Activated CD4-positive, alpha-beta memory T cell treated with anti-CD3 and anti-CD28 coated beads for 36 hours (primary cell): ENCODE measurements at regions of chr9 and their contacts with region 1.

Region 1: GRCh38 chr9:104991144-104991953 is 63.4 kb upstream of the ABCA1 start:
- DNase-seq: peak; percentile 93
- H3K4me3 Mint-ChIP-seq: peak overlapping the region; percentile 79
- H3K27ac Mint-ChIP-seq: peak overlapping the region; percentile 92
- H3K4me1 Mint-ChIP-seq: peaks cover 35% of the 10 kb centered on the region
- H3K27me3 Mint-ChIP-seq: peaks cover 29% of the 10 kb centered on the region

Region 2: GRCh38 chr9:104093647-104094533 is 897.5 kb before region 1 on chr9 and contains the start of gene SMC2:
- CTCF ChIA-PET with region 1: no interaction called
- POLR2A ChIA-PET with region 1: no interaction called
- intact Hi-C with region 1: loop called (anchors 10 kb)
- DNase-seq: peak; percentile 94
- H3K4me3 Mint-ChIP-seq: peak within 1 kb of the TSS; percentile 90
- H3K27ac Mint-ChIP-seq: peak within 1 kb of the TSS; percentile 99
- H3K4me1 Mint-ChIP-seq: peaks cover 32% of the 10 kb centered on the region
- H3K27me3 Mint-ChIP-seq: no peaks in the 10 kb centered on the region
- total RNA-seq, gene SMC2: 61.0 to 61.9 TPM

Region 3: GRCh38 chr9:104658496-104659195 is 332.7 kb before region 1 on chr9:
- CTCF ChIA-PET with region 1: no interaction called
- POLR2A ChIA-PET with region 1: no interaction called
- intact Hi-C with region 1: no loop called
- DNase-seq: no peak
- H3K4me3 Mint-ChIP-seq: no peak overlapping the region
- H3K27ac Mint-ChIP-seq: no peak overlapping the region
- H3K4me1 Mint-ChIP-seq: no peaks in the 10 kb centered on the region
- H3K27me3 Mint-ChIP-seq: peaks cover 1% of the 10 kb centered on the region

Region 4: GRCh38 chr9:104863180-104863883 is 128.0 kb before region 1 on chr9:
- CTCF ChIA-PET with region 1: no interaction called
- POLR2A ChIA-PET with region 1: no interaction called
- intact Hi-C with region 1: loop called (anchors 10 kb)
- DNase-seq: peak; percentile 57
- H3K4me3 Mint-ChIP-seq: no peak overlapping the region
- H3K27ac Mint-ChIP-seq: no peak overlapping the region
- H3K4me1 Mint-ChIP-seq: peaks cover 3% of the 10 kb centered on the region
- H3K27me3 Mint-ChIP-seq: no peaks in the 10 kb centered on the region

Region 5: GRCh38 chr9:104941597-104941996 is 49.8 kb before region 1 on chr9:
- CTCF ChIA-PET with region 1: no interaction called
- POLR2A ChIA-PET with region 1: no interaction called
- intact Hi-C with region 1: loop called (anchors 1 kb)
- DNase-seq: no peak
- H3K4me3 Mint-ChIP-seq: no peak overlapping the region
- H3K27ac Mint-ChIP-seq: peak overlapping the region; percentile 62
- H3K4me1 Mint-ChIP-seq: peaks cover 14% of the 10 kb centered on the region
- H3K27me3 Mint-ChIP-seq: no peaks in the 10 kb centered on the region

Region 6: GRCh38 chr9:104968025-104968982 is 23.0 kb before region 1 on chr9:
- CTCF ChIA-PET with region 1: no interaction called
- POLR2A ChIA-PET with region 1: interaction called, 7 read pairs
- intact Hi-C with region 1: loop called (anchors 1 kb)
- DNase-seq: peak; percentile 92
- H3K4me3 Mint-ChIP-seq: peak overlapping the region; percentile 89
- H3K27ac Mint-ChIP-seq: peak overlapping the region; percentile 84
- H3K4me1 Mint-ChIP-seq: peaks cover 10% of the 10 kb centered on the region
- H3K27me3 Mint-ChIP-seq: peaks cover 15% of the 10 kb centered on the region

Region 7: DNA sequence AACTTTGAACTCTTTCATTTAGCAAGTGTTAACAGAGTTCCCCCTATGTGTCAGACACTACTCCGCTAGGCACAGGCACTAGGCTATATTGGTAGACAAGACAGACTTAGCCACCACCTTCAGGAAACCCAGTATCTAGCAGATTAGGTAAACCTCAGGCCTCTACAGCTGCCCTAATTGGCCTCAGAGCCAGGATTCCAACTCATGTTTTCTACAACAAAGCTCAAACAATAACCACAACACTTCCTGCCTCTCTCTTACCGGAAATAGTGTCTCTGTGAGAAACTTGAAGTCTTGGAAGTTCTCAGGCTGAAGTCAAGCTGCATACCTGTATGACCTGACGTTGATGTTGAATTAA is 136.5 kb after region 1 on chr9:
- CTCF ChIA-PET with region 1: no interaction called
- POLR2A ChIA-PET with region 1: interaction called, 3 read pairs
- intact Hi-C with region 1: loop called (anchors 2 kb)
- DNase-seq: peak; percentile 62
- H3K4me3 Mint-ChIP-seq: no peak overlapping the region
- H3K27ac Mint-ChIP-seq: peak overlapping the region; percentile 60
- H3K4me1 Mint-ChIP-seq: peaks cover 38% of the 10 kb centered on the region
- H3K27me3 Mint-ChIP-seq: no peaks in the 10 kb centered on the region

Region 8: DNA sequence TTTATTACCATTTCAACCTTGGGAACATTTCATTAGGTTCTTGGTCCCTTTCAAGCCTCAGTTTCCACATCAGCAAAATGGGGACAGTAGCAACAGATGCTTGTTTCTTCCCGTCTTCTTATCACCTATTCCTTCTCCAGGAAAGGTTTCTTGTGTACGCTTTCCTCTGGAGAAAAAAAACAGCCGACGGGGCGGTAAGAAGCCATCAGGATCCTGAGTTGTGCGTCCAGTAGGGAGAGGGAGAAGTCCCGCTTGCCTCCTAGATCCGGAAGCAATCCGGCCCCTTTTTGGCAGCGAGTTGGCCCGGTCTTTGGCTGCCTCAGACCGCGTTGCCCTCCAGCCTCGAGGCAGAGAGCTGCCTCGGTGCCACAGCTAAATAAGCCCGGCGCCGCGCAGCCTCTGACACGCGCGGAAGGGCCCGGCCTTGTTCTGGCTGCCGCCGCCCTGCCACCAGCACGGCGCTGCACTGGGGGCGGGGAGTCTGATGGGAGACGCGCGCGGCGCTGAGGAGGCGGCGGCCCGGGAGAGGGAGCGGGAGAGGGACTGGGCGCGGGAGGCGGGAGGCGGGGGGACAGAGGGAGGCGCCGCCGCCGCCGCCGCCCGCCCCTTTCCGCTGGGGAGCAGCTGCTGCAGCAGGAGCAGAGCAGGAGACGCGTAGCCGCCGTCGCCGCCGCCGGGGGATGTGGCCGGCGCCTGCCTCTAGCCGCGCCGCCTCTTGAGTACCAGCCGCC is 252.8 kb after region 1 on chr9 and contains the start of gene SLC44A1:
- CTCF ChIA-PET with region 1: no interaction called
- POLR2A ChIA-PET with region 1: interaction called, 4 read pairs
- intact Hi-C with region 1: loop called (anchors 1 kb)
- DNase-seq: peak; percentile 95
- H3K4me3 Mint-ChIP-seq: peak within 1 kb of the TSS; percentile 82
- H3K27ac Mint-ChIP-seq: peak within 1 kb of the TSS; percentile 60
- H3K4me1 Mint-ChIP-seq: peaks cover 16% of the 10 kb centered on the region
- H3K27me3 Mint-ChIP-seq: peaks cover 6% of the 10 kb centered on the region
- total RNA-seq, gene SLC44A1: 11.8 to 12.2 TPM